GM12878 (cell line): ENCODE measurements at regions of chr15 and their contacts with region 1.

Region 1: GRCh38 chr15:83248151-83249029 is 36.1 kb downstream of the BNC1 start:
- DNase-seq: peak; percentile 24
- ATAC-seq: peak; percentile 85
- H3K4me3 ChIP-seq: no peak overlapping the region
- H3K27ac ChIP-seq: no peak overlapping the region
- H3K4me1 ChIP-seq: no peaks in the 10 kb centered on the region
- H3K27me3 ChIP-seq: no peaks in the 10 kb centered on the region; a peak in 2 of 4 replicates
- CTCF ChIP-seq: peak; percentile 70 to 87 (median 81); a peak in 5 of 6 replicates
- EP300 ChIP-seq: no peak
- POLR2A ChIP-seq: no peak
- RAD21 ChIP-seq: peak; percentile 86

Region 2: DNA sequence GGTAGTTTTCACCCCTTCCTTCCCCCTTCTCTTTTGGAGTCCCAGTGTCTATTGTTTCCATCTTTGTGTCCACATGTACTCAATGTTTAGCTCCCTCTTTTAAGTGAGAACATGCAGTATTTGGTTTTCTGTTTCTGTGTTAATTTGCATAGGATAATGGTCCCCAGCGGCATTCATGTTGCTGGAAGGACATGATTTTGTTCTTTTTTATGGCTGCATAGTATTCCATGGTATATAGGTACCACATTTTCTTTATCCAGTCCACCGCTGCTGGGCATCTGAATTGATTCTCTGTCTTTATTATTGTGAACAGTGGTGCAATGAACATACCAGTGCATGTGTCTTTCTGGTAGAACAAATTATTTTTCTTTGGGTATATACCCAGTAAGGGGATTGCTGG is 33.1 kb before region 1 on chr15:
- CTCF ChIA-PET with region 1: interaction called, 6 read pairs
- POLR2A ChIA-PET with region 1: no interaction called
- RAD21 ChIA-PET with region 1: interaction called, 3 read pairs
- SMC1A ChIA-PET with region 1: no interaction called
- in situ Hi-C with region 1: no loop called
- intact Hi-C with region 1: loop called (anchors 2 kb)
- DNase-seq: no peak
- ATAC-seq: no peak
- H3K4me3 ChIP-seq: no peak overlapping the region
- H3K27ac ChIP-seq: no peak overlapping the region
- H3K4me1 ChIP-seq: peaks cover 5% of the 10 kb centered on the region; the same call in 1 of the 2 replicates
- H3K27me3 ChIP-seq: no peaks in the 10 kb centered on the region
- CTCF ChIP-seq: no peak
- EP300 ChIP-seq: no peak
- POLR2A ChIP-seq: no peak
- RAD21 ChIP-seq: no peak

Region 3: GRCh38 chr15:83327041-83327440 is 78.7 kb after region 1 on chr15:
- CTCF ChIA-PET with region 1: no interaction called
- POLR2A ChIA-PET with region 1: no interaction called
- RAD21 ChIA-PET with region 1: no interaction called
- SMC1A ChIA-PET with region 1: no interaction called
- in situ Hi-C with region 1: no loop called
- intact Hi-C with region 1: no loop called
- DNase-seq: no peak
- ATAC-seq: no peak
- H3K4me3 ChIP-seq: no peak overlapping the region
- H3K27ac ChIP-seq: no peak overlapping the region
- H3K4me1 ChIP-seq: no peaks in the 10 kb centered on the region
- H3K27me3 ChIP-seq: no peaks in the 10 kb centered on the region
- CTCF ChIP-seq: no peak
- EP300 ChIP-seq: no peak
- POLR2A ChIP-seq: no peak
- RAD21 ChIP-seq: no peak

Region 4: GRCh38 chr15:83372420-83372891 is 124.1 kb after region 1 on chr15:
- CTCF ChIA-PET with region 1: interaction called, 8 read pairs
- POLR2A ChIA-PET with region 1: no interaction called
- RAD21 ChIA-PET with region 1: interaction called, 3 read pairs
- SMC1A ChIA-PET with region 1: interaction called, 3 read pairs
- in situ Hi-C with region 1: loop called (anchors 10 kb)
- intact Hi-C with region 1: no loop called
- DNase-seq: no peak
- ATAC-seq: no peak
- H3K4me3 ChIP-seq: no peak overlapping the region
- H3K27ac ChIP-seq: no peak overlapping the region
- H3K4me1 ChIP-seq: no peaks in the 10 kb centered on the region
- H3K27me3 ChIP-seq: peaks cover 3 to 7% of the 10 kb centered on the region in 2 experiments; a peak in 2 of 4 replicates
- CTCF ChIP-seq: no peak
- EP300 ChIP-seq: no peak
- POLR2A ChIP-seq: no peak
- RAD21 ChIP-seq: no peak

Region 5: DNA sequence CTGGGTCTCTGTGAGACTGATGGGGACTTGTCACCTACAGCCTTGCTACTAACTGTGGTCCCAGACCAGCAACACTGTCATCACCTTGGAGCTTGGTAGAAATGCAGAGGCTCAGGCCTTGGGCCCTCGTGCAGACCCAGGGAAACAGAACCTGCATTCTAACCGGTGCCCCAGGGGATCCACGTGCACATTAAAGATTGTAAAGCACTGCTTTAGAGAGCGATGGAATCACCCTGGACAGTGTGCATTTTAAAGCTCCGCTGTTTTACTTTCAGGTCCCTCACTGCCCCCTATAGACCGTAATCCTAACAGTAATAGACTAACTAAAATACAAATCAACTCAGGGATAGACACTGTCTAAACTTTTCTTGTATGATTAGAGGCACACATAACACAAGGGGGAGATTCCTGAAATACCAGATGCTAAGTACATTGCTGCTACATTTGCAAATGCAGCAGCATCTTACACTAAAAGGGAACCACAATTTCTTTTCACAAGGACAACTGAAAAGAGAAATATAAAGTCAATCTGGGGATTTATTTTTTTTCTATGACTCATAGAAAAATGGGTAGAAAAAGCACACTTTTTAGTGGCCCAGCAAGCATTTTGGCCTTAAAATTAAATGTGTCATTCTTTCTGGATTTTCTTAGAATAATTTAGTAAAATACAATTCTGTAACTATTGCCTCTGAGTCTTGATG is 188.2 kb after region 1 on chr15:
- CTCF ChIA-PET with region 1: interaction called, 29 read pairs
- POLR2A ChIA-PET with region 1: no interaction called
- RAD21 ChIA-PET with region 1: interaction called, 21 read pairs
- SMC1A ChIA-PET with region 1: interaction called, 19 read pairs
- in situ Hi-C with region 1: no loop called
- intact Hi-C with region 1: loop called (anchors 2 kb)
- DNase-seq: no peak
- ATAC-seq: peak; percentile 70
- H3K4me3 ChIP-seq: no peak overlapping the region
- H3K27ac ChIP-seq: no peak overlapping the region
- H3K4me1 ChIP-seq: no peaks in the 10 kb centered on the region
- H3K27me3 ChIP-seq: peaks cover 0 to 2% of the 10 kb centered on the region in 2 experiments; a peak in 1 of 4 replicates
- CTCF ChIP-seq: peak in 2 of 3 experiments; percentile 16 to 32; a peak in 1 of 6 replicates
- EP300 ChIP-seq: no peak
- POLR2A ChIP-seq: no peak
- RAD21 ChIP-seq: no peak

Region 6: DNA sequence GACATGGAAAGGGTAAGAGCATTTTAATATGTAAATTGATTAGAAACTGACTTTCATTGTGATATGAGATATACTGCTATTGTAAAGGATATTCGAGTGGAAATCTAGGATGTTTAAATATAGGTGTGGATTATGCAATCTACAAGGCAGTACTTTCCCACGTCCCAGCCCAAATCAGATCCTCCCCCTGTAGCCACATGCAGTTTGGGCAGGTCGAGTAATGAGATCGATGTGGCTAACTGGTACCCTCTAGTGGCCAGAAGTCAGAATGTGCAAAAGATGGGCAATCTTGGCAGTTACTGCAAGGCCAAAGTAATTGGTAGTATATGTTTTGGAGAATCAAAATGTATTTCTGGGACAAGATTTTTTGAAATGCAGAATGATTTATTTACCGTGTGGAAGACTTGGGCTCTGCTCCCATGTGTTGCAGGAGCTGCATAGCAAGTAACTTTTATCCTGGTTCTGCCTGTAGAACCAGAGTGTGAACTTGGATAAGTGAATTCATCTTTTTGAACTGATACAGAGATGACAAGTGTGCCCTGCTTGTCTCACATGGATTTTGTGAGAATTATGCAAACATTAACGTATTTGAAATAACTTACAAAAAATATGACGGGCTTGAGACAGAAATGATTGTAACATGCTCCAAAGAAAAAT is 311.0 kb after region 1 on chr15:
- CTCF ChIA-PET with region 1: interaction called, 42 read pairs
- POLR2A ChIA-PET with region 1: no interaction called
- RAD21 ChIA-PET with region 1: interaction called, 4 read pairs
- SMC1A ChIA-PET with region 1: interaction called, 15 read pairs
- in situ Hi-C with region 1: loop called (anchors 5 kb)
- intact Hi-C with region 1: loop called (anchors 1 kb)
- DNase-seq: peak; percentile 20
- ATAC-seq: peak; percentile 88
- H3K4me3 ChIP-seq: no peak overlapping the region
- H3K27ac ChIP-seq: no peak overlapping the region
- H3K4me1 ChIP-seq: no peaks in the 10 kb centered on the region
- H3K27me3 ChIP-seq: no peaks in the 10 kb centered on the region
- CTCF ChIP-seq: peak; percentile 78 to 89 (median 85)
- EP300 ChIP-seq: no peak
- POLR2A ChIP-seq: no peak
- RAD21 ChIP-seq: peak; percentile 80